Heart right ventricle (tissue), 16 donors: ENCODE measurements at regions of chr9 and their contacts with region 1.

Region 1: GRCh38 chr9:129802851-129803675 is at the start of gene TOR1B:
- DNase-seq: peak; percentile 95 to 96
- ATAC-seq: peak; percentile 96 to 99 (median 99)
- H3K4me3 ChIP-seq: peak within 1 kb of the TSS; percentile 66 to 96 (median 84)
- H3K27ac ChIP-seq: peak within 1 kb of the TSS; percentile 54 to 90 (median 88)
- H3K4me1 ChIP-seq: peaks cover 6 to 27% (median 11%) of the 10 kb centered on the region in 9 donors
- H3K27me3 ChIP-seq: no peaks in the 10 kb centered on the region
- CTCF ChIP-seq: no peak
- total RNA-seq, gene TOR1B: 6.9 to 13.8 (median 11.0) TPM

Region 2: DNA sequence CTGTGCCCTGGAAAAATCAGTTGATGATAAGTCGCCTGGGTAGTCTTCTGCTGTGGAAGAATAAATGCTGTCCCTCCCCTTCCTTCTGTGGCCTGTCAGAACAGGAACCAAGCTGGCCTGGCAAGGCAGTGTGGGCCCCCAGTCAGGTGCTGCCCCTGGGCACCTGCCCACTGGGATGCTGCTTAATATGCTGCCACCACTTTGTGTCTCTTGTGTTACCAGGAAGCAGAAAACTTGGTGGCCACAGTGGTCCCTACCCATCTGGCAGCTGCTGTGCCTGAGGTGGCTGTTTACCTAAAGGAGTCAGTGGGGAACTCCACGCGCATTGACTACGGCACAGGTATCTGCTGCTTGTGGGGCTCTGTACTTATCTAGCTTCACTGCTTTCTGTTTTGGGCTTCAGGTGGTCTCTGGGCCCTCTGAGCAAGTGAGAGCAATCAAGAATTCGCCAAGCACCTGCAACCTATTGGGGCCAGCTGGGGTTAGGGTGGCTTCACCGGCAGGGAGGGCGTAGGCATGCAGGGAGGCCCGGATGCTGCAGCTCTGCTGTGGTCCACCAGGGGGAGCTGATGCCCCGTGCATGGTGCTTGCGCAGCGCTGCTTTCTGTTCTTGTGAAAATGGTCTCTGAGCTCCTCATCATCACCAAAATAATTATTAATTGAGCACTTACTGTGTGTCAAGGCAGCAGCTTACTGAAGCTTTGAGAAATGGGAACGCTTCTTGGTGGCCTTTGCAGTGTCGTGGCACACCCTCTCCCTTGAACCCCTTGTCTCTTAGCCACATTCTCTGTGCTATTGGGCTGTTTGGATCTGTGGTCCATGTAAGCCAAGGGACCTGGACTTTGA is 671.5 kb before region 1 on chr9:
- intact Hi-C with region 1: loop called in 1 of 10 experiments (anchors 5 kb)
- DNase-seq: peak; percentile 81 to 82
- ATAC-seq: peak; percentile 80 to 90 (median 86)
- H3K4me3 ChIP-seq: no peak overlapping the region
- H3K27ac ChIP-seq: peak overlapping the region in 2 of 10 donors; percentile 2 to 28
- H3K4me1 ChIP-seq: peaks cover 0 to 20% (median 6%) of the 10 kb centered on the region in 9 donors
- H3K27me3 ChIP-seq: no peaks in the 10 kb centered on the region
- CTCF ChIP-seq: peak; percentile 95 to 99 (median 98)

Region 3: GRCh38 chr9:130701056-130702022 is 898.3 kb after region 1 on chr9:
- intact Hi-C with region 1: loop called in 1 of 10 experiments (anchors 5 kb)
- DNase-seq: peak; percentile 77 to 85
- ATAC-seq: peak; percentile 85 to 97 (median 94)
- H3K4me3 ChIP-seq: no peak overlapping the region
- H3K27ac ChIP-seq: peak overlapping the region in 2 of 10 donors; percentile 37 to 65
- H3K4me1 ChIP-seq: peaks cover 0 to 18% (median 6%) of the 10 kb centered on the region in 9 donors
- H3K27me3 ChIP-seq: no peaks in the 10 kb centered on the region
- CTCF ChIP-seq: peak; percentile 81 to 98 (median 95)